Activated CD4-positive, alpha-beta memory T cell treated with anti-CD3 and anti-CD28 coated beads for 36 hours (primary cell): ENCODE measurements at regions of chr22 and their contacts with region 1.

Region 1: GRCh38 chr22:40950962-40951794 is at the start of gene RBX1:
- DNase-seq: peak; percentile 99
- H3K4me3 Mint-ChIP-seq: peak within 1 kb of the TSS; percentile 99
- H3K27ac Mint-ChIP-seq: peak within 1 kb of the TSS; percentile 99
- H3K4me1 Mint-ChIP-seq: peaks cover 30% of the 10 kb centered on the region
- H3K27me3 Mint-ChIP-seq: no peaks in the 10 kb centered on the region
- total RNA-seq, gene RBX1: 96.9 to 99.4 TPM

Region 2: DNA sequence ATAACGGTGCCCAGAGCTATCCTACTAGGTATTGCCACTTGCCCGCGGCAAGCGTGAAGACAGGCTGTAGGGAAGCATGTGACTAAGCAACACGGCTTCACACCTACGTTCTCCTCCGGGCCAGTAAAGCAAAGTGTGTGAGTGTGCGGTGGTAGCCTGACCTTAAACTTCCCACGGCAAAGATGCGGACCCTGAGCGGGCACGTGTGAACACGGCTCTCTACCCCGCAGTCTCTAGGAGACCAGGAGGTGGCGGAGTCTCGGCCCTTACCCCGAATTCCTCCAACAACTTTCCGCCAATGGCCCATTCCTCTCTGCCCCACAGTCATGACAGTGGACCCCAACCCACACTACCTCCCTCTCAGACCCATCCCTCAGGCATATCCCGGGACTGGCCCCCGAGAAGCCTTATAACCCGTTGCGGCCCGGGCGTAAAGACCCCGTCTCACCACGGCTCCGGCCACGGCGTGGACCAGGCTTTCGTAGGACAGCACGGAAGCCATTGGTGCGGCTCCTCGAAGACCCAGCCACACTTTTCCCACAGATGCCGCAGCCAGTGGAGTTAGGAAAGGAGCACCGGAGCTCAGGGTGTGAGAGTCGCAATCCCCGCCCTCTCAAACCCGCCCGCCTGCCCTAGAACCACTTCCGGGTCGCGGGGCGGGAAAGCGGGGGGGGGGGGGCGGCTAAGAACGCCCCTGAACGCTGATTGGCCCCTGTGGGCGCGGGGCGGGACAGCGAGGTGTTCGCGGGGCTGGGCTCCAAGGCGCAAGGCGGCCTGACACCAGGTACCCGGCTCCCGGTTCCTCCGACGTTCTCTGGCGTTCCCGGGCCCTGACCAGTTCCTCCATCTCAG is 132.2 kb before region 1 on chr22 and contains the start of gene SLC25A17:
- CTCF ChIA-PET with region 1: no interaction called
- POLR2A ChIA-PET with region 1: interaction called, 3 read pairs
- intact Hi-C with region 1: loop called (anchors 1 kb)
- DNase-seq: peak; percentile 92
- H3K4me3 Mint-ChIP-seq: peak within 1 kb of the TSS; percentile 92
- H3K27ac Mint-ChIP-seq: peak within 1 kb of the TSS; percentile 76
- H3K4me1 Mint-ChIP-seq: peaks cover 33% of the 10 kb centered on the region
- H3K27me3 Mint-ChIP-seq: no peaks in the 10 kb centered on the region
- total RNA-seq, gene SLC25A17: 29.3 to 30.8 TPM

Region 3: GRCh38 chr22:41022470-41023298 is 71.5 kb after region 1 on chr22:
- CTCF ChIA-PET with region 1: no interaction called
- POLR2A ChIA-PET with region 1: interaction called, 23 read pairs
- intact Hi-C with region 1: loop called (anchors 1 kb)
- DNase-seq: peak; percentile 90
- H3K4me3 Mint-ChIP-seq: peak overlapping the region; percentile 79
- H3K27ac Mint-ChIP-seq: peak overlapping the region; percentile 70
- H3K4me1 Mint-ChIP-seq: peaks cover 14% of the 10 kb centered on the region
- H3K27me3 Mint-ChIP-seq: no peaks in the 10 kb centered on the region

Region 4: DNA sequence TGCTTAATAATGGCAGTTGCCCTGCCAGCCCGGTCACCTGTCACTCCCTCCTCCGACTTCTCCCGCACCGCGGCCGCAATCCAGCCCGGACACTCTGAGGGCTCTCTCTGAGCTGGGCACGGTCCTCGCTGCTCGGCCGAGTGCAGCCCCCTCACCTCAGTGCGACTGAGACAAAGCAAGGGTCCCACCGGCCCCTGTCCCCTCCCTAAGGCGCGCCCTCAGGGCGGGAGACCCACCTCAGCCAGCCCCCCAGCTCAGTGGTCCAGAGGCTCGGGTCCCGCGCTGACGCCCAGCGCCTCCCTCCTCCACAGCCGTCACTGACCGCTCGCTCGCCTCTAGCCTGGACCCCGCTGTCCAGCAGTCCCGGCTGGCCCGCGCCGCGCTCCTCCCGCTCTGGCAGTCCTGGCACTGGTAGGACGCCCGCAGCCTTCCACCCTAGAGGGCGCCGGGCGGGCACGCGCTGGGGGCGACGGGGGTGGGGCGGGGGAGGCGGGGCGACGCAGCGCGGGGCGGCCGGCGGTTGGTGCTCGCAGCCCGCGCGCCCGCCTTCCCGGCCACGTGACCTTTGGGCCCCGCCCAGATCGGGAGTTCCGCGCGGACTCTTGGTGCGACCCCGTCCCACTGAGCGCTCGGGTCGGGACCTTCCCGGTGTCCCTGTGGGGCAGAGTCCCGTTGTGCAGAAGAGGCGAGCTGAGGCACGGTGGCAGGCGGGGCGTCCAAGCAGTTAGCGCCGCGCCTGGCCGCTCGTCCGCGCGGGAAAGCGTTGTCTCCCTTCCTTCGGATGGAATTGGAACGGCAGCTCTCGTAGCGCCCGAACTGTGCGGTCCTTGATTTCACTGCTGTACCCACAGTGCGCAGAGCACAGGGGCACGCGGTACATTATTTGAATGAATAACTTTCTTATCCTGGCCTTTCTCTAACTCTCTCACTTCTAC is 246.1 kb after region 1 on chr22:
- CTCF ChIA-PET with region 1: no interaction called
- POLR2A ChIA-PET with region 1: no interaction called
- intact Hi-C with region 1: loop called (anchors 5 kb)
- DNase-seq: peak; percentile 85
- H3K4me3 Mint-ChIP-seq: peak overlapping the region; percentile 84
- H3K27ac Mint-ChIP-seq: no peak overlapping the region
- H3K4me1 Mint-ChIP-seq: peaks cover 9% of the 10 kb centered on the region
- H3K27me3 Mint-ChIP-seq: no peaks in the 10 kb centered on the region

Region 5: GRCh38 chr22:41381329-41382097 is 430.3 kb after region 1 on chr22 and contains the start of gene TEF:
- CTCF ChIA-PET with region 1: no interaction called
- POLR2A ChIA-PET with region 1: no interaction called
- intact Hi-C with region 1: loop called (anchors 1 kb)
- DNase-seq: peak; percentile 98
- H3K4me3 Mint-ChIP-seq: peak within 1 kb of the TSS; percentile 81
- H3K27ac Mint-ChIP-seq: peak within 1 kb of the TSS; percentile 86
- H3K4me1 Mint-ChIP-seq: peaks cover 15% of the 10 kb centered on the region
- H3K27me3 Mint-ChIP-seq: no peaks in the 10 kb centered on the region
- total RNA-seq, gene TEF: 1.4 to 1.6 TPM